CD4-positive, alpha-beta T cell (primary cell): ENCODE measurements at regions of chr7 and their contacts with region 1.

Region 1: GRCh38 chr7:104983578-104984539 is 30.1 kb upstream of the KMT2E start:
- DNase-seq: peak; percentile 69 to 91 (median 78)
- ATAC-seq: peak; percentile 82
- H3K4me3 ChIP-seq: peak overlapping the region; percentile 80
- H3K4me3 Mint-ChIP-seq: peak overlapping the region; percentile 100
- H3K27ac ChIP-seq: peak overlapping the region; percentile 96 to 98
- H3K27ac Mint-ChIP-seq: peak overlapping the region; percentile 99
- H3K4me1 ChIP-seq: peaks cover 26% of the 10 kb centered on the region
- H3K4me1 Mint-ChIP-seq: peaks cover 63% of the 10 kb centered on the region
- H3K27me3 ChIP-seq: no peaks in the 10 kb centered on the region
- H3K27me3 Mint-ChIP-seq: no peaks in the 10 kb centered on the region
- CTCF ChIP-seq: peak; percentile 54

Region 2: GRCh38 chr7:104723001-104723400 is 260.9 kb before region 1 on chr7:
- CTCF ChIA-PET with region 1: no interaction called
- POLR2A ChIA-PET with region 1: no interaction called
- intact Hi-C with region 1: no loop called
- DNase-seq: no peak
- ATAC-seq: no peak
- H3K4me3 ChIP-seq: no peak overlapping the region
- H3K4me3 Mint-ChIP-seq: no peak overlapping the region
- H3K27ac ChIP-seq: no peak overlapping the region
- H3K27ac Mint-ChIP-seq: no peak overlapping the region
- H3K4me1 ChIP-seq: no peaks in the 10 kb centered on the region
- H3K4me1 Mint-ChIP-seq: no peaks in the 10 kb centered on the region
- H3K27me3 ChIP-seq: no peaks in the 10 kb centered on the region
- H3K27me3 Mint-ChIP-seq: peaks cover 12% of the 10 kb centered on the region
- CTCF ChIP-seq: no peak

Region 3: GRCh38 chr7:105003275-105003674 is 19.4 kb after region 1 on chr7:
- CTCF ChIA-PET with region 1: interaction called, 159 read pairs
- POLR2A ChIA-PET with region 1: interaction called, 20 read pairs
- intact Hi-C with region 1: no loop called
- DNase-seq: peak in 6 of 14 experiments; percentile 18 to 63 (median 42)
- ATAC-seq: peak; percentile 81
- H3K4me3 ChIP-seq: no peak overlapping the region
- H3K4me3 Mint-ChIP-seq: peak overlapping the region; percentile 67
- H3K27ac ChIP-seq: peak overlapping the region; percentile 16 to 26
- H3K27ac Mint-ChIP-seq: peak overlapping the region; percentile 92
- H3K4me1 ChIP-seq: peaks cover 68% of the 10 kb centered on the region
- H3K4me1 Mint-ChIP-seq: peaks cover 94% of the 10 kb centered on the region
- H3K27me3 ChIP-seq: no peaks in the 10 kb centered on the region
- H3K27me3 Mint-ChIP-seq: no peaks in the 10 kb centered on the region
- CTCF ChIP-seq: no peak

Region 4: DNA sequence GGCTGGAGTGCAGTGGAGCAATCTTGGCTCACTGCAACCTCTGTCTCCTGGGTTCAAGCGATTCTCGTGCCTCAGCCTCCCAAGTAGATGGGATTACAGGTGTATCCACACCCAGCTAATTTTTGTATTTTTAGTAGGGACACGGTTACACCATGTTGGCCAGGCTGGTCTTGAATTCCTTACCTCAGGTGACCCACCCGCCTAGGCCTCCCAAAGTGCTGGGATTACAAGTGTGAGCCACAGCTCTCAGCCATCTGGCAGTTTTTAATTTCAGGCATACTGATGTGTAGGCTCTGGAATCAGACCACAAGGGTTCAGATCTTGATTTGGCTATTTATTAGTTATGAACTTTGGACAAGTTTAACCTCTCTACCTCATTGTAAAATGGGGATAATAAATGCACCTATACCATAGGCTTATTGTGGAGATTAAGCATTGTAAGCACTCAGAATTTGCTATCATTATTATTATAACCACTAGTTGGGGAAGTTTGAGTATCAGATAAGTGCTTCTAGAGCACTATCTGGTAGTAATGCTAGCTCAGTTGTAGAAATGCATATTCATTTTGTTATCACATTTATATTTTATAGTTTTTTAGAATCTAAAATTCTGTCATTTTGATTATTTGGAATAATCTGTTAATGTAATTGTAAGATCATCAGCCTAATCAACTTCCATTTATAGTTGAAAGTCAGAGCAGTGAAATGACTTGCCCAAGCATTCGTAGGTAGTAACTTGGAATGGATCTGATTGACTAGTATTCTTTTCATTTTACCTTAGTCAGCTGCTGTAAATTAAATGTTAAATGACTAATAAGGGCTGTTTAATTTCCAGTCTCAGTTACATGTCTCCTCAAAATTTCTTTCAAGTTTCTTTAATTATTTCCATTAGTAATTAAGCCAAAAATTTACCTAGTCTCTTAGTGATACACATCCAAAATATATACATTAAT is 52.6 kb after region 1 on chr7:
- CTCF ChIA-PET with region 1: interaction called, 59 read pairs
- POLR2A ChIA-PET with region 1: interaction called, 34 read pairs
- intact Hi-C with region 1: loop called in 1 of 2 experiments (anchors 1 kb)
- DNase-seq: no peak
- ATAC-seq: no peak
- H3K4me3 ChIP-seq: no peak overlapping the region
- H3K4me3 Mint-ChIP-seq: peak overlapping the region; percentile 27
- H3K27ac ChIP-seq: no peak overlapping the region
- H3K27ac Mint-ChIP-seq: peak overlapping the region; percentile 61
- H3K4me1 ChIP-seq: peaks cover 44% of the 10 kb centered on the region
- H3K4me1 Mint-ChIP-seq: peaks cover 75% of the 10 kb centered on the region
- H3K27me3 ChIP-seq: no peaks in the 10 kb centered on the region
- H3K27me3 Mint-ChIP-seq: no peaks in the 10 kb centered on the region
- CTCF ChIP-seq: no peak

Region 5: DNA sequence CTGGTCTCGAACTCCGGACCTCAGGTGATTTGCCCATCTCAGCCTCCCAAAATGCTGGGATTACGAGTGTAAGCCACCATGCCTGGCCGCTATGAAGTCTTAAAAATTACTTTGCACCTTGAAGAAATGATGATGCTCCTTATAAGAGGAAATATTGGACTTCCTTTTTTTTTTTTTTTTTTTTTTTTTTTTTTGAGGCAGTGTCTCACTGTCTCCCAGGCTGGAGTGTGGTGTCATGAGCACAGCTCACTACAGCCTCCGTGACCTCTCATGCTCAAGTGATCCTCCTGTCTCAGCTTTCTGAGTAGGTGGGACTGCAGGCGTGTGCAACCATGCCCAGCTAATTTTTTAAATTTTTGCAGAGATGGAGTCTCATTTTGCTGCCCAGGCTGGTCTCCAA is 95.5 kb after region 1 on chr7:
- CTCF ChIA-PET with region 1: interaction called, 12 read pairs
- POLR2A ChIA-PET with region 1: no interaction called
- intact Hi-C with region 1: no loop called
- DNase-seq: no peak
- ATAC-seq: no peak
- H3K4me3 ChIP-seq: no peak overlapping the region
- H3K4me3 Mint-ChIP-seq: no peak overlapping the region
- H3K27ac ChIP-seq: no peak overlapping the region
- H3K27ac Mint-ChIP-seq: peak overlapping the region; percentile 14
- H3K4me1 ChIP-seq: no peaks in the 10 kb centered on the region
- H3K4me1 Mint-ChIP-seq: peaks cover 18% of the 10 kb centered on the region
- H3K27me3 ChIP-seq: no peaks in the 10 kb centered on the region
- H3K27me3 Mint-ChIP-seq: no peaks in the 10 kb centered on the region
- CTCF ChIP-seq: no peak

Region 6: DNA sequence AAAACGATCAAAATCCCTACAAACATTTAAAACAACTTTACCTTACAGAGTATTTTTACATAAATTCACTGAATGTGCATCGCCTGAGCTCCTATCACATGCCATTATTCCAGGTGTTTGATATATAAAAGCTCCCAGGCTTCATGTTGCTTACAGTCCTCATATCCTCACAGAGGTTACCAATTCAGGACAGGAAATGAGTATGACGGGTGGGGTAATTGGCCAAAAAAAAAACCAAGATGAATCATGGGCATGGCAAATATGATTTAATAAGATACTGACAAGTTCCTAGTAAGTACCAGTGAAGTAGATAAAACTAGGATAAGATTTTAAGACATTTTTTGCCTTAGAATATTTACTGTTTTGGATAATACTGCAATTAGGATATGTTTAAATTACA is 166.0 kb after region 1 on chr7:
- CTCF ChIA-PET with region 1: no interaction called
- POLR2A ChIA-PET with region 1: no interaction called
- intact Hi-C with region 1: no loop called
- DNase-seq: no peak
- ATAC-seq: no peak
- H3K4me3 ChIP-seq: no peak overlapping the region
- H3K4me3 Mint-ChIP-seq: no peak overlapping the region
- H3K27ac ChIP-seq: no peak overlapping the region
- H3K27ac Mint-ChIP-seq: no peak overlapping the region
- H3K4me1 ChIP-seq: no peaks in the 10 kb centered on the region
- H3K4me1 Mint-ChIP-seq: peaks cover 4% of the 10 kb centered on the region
- H3K27me3 ChIP-seq: no peaks in the 10 kb centered on the region
- H3K27me3 Mint-ChIP-seq: no peaks in the 10 kb centered on the region
- CTCF ChIP-seq: no peak

Region 7: DNA sequence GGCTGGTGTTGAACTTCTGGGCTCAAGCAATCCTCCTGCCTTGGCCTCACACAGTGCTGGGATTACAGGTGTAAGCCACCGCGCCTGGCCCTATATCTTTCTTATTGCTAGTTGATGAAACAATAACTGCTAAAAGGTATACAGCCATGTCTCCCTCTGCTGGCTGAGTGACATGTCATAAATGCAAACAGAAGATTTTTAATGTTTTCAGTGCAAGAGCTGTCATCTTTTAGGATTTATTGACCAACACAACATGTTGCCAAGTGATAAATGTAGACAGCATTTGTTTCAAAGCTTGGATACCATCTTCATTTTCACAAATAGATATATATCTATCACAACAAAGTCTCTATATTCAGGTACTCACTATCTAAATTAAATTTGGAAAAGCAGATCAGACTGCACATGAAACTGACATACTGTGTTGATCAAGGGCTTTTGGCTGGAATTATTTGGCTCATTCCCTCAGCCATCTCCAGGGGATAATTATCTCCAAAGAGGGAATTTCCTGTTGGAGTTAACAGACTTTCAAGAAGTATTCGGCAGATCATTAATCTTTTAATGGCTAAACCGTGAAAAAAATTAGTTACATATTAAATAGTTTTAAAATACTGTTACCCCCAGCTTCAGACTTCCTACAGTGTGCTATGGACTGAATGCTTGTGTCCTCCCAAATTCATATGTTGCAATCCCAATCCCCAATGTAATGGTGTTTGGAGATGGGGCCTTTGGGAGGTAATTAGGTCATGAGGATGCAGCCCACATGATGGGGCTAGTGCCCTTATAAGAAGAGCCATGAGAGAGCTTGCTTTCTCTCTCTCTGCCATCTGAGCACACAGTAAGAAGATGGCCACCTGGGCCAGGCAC is 446.1 kb after region 1 on chr7:
- CTCF ChIA-PET with region 1: no interaction called
- POLR2A ChIA-PET with region 1: interaction called, 4 read pairs
- intact Hi-C with region 1: loop called (anchors 1 to 5 kb)
- DNase-seq: peak; percentile 23 to 78 (median 45)
- ATAC-seq: peak; percentile 76
- H3K4me3 ChIP-seq: no peak overlapping the region
- H3K4me3 Mint-ChIP-seq: no peak overlapping the region
- H3K27ac ChIP-seq: no peak overlapping the region
- H3K27ac Mint-ChIP-seq: no peak overlapping the region
- H3K4me1 ChIP-seq: peaks cover 3% of the 10 kb centered on the region
- H3K4me1 Mint-ChIP-seq: peaks cover 7% of the 10 kb centered on the region
- H3K27me3 ChIP-seq: no peaks in the 10 kb centered on the region
- H3K27me3 Mint-ChIP-seq: no peaks in the 10 kb centered on the region
- CTCF ChIP-seq: peak; percentile 72

Region 8: GRCh38 chr7:105531792-105532671 is 548.2 kb after region 1 on chr7 and contains the start of gene RINT1:
- CTCF ChIA-PET with region 1: no interaction called
- POLR2A ChIA-PET with region 1: interaction called, 14 read pairs
- intact Hi-C with region 1: no loop called
- DNase-seq: peak; percentile 78 to 94 (median 86)
- ATAC-seq: peak; percentile 88
- H3K4me3 ChIP-seq: peak within 1 kb of the TSS; percentile 82
- H3K4me3 Mint-ChIP-seq: peak within 1 kb of the TSS; percentile 94
- H3K27ac ChIP-seq: peak within 1 kb of the TSS; percentile 85 to 89
- H3K27ac Mint-ChIP-seq: peak within 1 kb of the TSS; percentile 87
- H3K4me1 ChIP-seq: peaks cover 35% of the 10 kb centered on the region
- H3K4me1 Mint-ChIP-seq: peaks cover 44% of the 10 kb centered on the region
- H3K27me3 ChIP-seq: no peaks in the 10 kb centered on the region
- H3K27me3 Mint-ChIP-seq: no peaks in the 10 kb centered on the region
- CTCF ChIP-seq: peak; percentile 71
- total RNA-seq, gene RINT1: 38.0 to 39.5 TPM